AG04450 (cell line): ENCODE measurements at regions of chr15 and their contacts with region 1.

Region 1: GRCh38 chr15:42471002-42471401 is 19.9 kb downstream of the ZNF106 start:
- DNase-seq: no peak
- H3K4me3 ChIP-seq: no peak overlapping the region
- H3K27ac ChIP-seq: no peak overlapping the region
- H3K27me3 ChIP-seq: no peaks in the 10 kb centered on the region
- CTCF ChIP-seq: no peak

Region 2: DNA sequence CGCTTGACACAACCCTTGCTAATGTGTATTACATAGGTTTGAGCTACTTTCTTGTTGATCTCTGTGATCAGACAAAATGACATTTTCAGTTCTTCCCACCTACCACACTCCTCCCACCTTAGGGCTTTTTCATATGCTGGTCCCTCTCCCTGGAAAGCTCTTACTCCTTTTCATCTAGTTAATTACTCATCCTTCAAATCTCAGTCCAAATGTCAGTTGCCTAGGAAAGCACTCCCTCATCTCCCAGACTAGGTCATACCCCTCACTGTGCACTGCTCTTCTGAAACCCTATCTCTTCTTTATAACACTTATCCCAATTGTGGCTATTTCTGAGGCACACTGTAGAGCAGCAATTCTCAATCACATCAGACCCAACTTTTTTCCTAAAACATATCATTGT is 12.7 kb after region 1 on chr15:
- CTCF ChIA-PET with region 1: interaction called, 12 read pairs
- POLR2A ChIA-PET with region 1: no interaction called
- DNase-seq: no peak
- H3K4me3 ChIP-seq: no peak overlapping the region
- H3K27ac ChIP-seq: no peak overlapping the region
- H3K27me3 ChIP-seq: no peaks in the 10 kb centered on the region
- CTCF ChIP-seq: no peak